HCT116 (cell line): ENCODE measurements at regions of chr1 and their contacts with region 1.

Region 1: GRCh38 chr1:100132566-100133477 is at the starts of genes SASS6 and TRMT13:
- DNase-seq: peak; percentile 97
- ATAC-seq: peak; percentile 92
- H3K4me3 ChIP-seq: peak within 1 kb of the TSS; percentile 76 to 78
- H3K27ac ChIP-seq: peak within 1 kb of the TSS; percentile 62
- H3K4me1 ChIP-seq: peaks cover 14 to 18% of the 10 kb centered on the region in 2 experiments
- H3K27me3 ChIP-seq: no peaks in the 10 kb centered on the region
- CTCF ChIP-seq: no peak
- POLR2A ChIP-seq: peak; percentile 67
- RAD21 ChIP-seq: no peak
- total RNA-seq, gene SASS6: 13.7 TPM
- total RNA-seq, gene TRMT13: 13.2 TPM

Region 2: GRCh38 chr1:99808391-99809115 is 324.3 kb before region 1 on chr1:
- CTCF ChIA-PET with region 1: no interaction called
- POLR2A ChIA-PET with region 1: no interaction called
- RAD21 ChIA-PET with region 1: no interaction called
- intact Hi-C with region 1: loop called (anchors 5 kb)
- DNase-seq: peak; percentile 85
- ATAC-seq: peak; percentile 92
- H3K4me3 ChIP-seq: peak overlapping the region in 1 of 2 experiments; percentile 23; a peak in 1 of 4 replicates
- H3K27ac ChIP-seq: no peak overlapping the region
- H3K4me1 ChIP-seq: peaks cover 0 to 11% of the 10 kb centered on the region in 2 experiments; a peak in 2 of 4 replicates
- H3K27me3 ChIP-seq: no peaks in the 10 kb centered on the region
- CTCF ChIP-seq: peak; percentile 21 to 75 (median 71); a peak in 5 of 6 replicates
- POLR2A ChIP-seq: no peak
- RAD21 ChIP-seq: peak; percentile 95

Region 3: GRCh38 chr1:99969729-99970621 is 162.8 kb before region 1 on chr1 and contains the start of gene SLC35A3:
- CTCF ChIA-PET with region 1: no interaction called
- POLR2A ChIA-PET with region 1: no interaction called
- RAD21 ChIA-PET with region 1: no interaction called
- intact Hi-C with region 1: loop called (anchors 5 kb)
- DNase-seq: peak; percentile 62
- ATAC-seq: peak; percentile 91
- H3K4me3 ChIP-seq: peak within 1 kb of the TSS; percentile 59 to 65
- H3K27ac ChIP-seq: peak within 1 kb of the TSS; percentile 74
- H3K4me1 ChIP-seq: peaks cover 10 to 28% of the 10 kb centered on the region in 2 experiments
- H3K27me3 ChIP-seq: no peaks in the 10 kb centered on the region
- CTCF ChIP-seq: no peak
- POLR2A ChIP-seq: peak; percentile 78
- RAD21 ChIP-seq: 0 out of 2 replicates have a peak, but pooled peaks have one; percentile 10
- total RNA-seq, gene SLC35A3: 21.6 TPM

Region 4: GRCh38 chr1:100122177-100122576 is 10.6 kb before region 1 on chr1:
- CTCF ChIA-PET with region 1: no interaction called
- POLR2A ChIA-PET with region 1: no interaction called
- RAD21 ChIA-PET with region 1: no interaction called
- intact Hi-C with region 1: no loop called
- DNase-seq: no peak
- ATAC-seq: no peak
- H3K4me3 ChIP-seq: no peak overlapping the region
- H3K27ac ChIP-seq: no peak overlapping the region
- H3K4me1 ChIP-seq: no peaks in the 10 kb centered on the region
- H3K27me3 ChIP-seq: no peaks in the 10 kb centered on the region
- CTCF ChIP-seq: no peak
- POLR2A ChIP-seq: no peak
- RAD21 ChIP-seq: no peak